ENCODE measurements at regions of chr13 and their contacts with region 1.

Region 1: DNA sequence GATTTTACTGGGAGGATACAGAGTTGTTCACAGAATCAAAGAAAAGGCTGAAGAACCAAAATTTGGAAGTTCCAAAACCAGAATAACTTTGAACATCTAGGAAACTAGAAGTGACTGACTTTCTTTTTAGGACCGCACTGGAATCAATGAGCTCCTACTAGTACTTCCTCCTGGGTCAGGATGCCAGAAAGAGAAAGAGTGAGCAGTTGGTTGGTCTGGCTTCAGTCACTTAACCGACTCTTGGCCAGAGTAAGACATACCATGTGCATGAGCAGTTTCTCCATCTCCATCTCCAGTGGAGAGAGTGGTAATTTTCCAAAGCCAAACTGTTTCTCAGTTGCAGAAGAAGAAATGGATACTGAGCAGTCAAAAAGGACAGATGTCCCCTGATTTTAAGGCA is 27.1 kb upstream of the MTUS2 start:
- DNase-seq: no peak
- H3K4me3 Mint-ChIP-seq: no peak overlapping the region
- H3K27ac Mint-ChIP-seq: no peak overlapping the region
- H3K4me1 Mint-ChIP-seq: peaks cover 4% of the 10 kb centered on the region
- H3K27me3 Mint-ChIP-seq: peaks cover 21% of the 10 kb centered on the region

Region 2: GRCh38 chr13:27362064-27362883 is 1430.7 kb before region 1 on chr13:
- intact Hi-C with region 1: loop called (anchors 1 kb)
- DNase-seq: peak; percentile 71
- H3K4me3 Mint-ChIP-seq: peak overlapping the region; percentile 49
- H3K27ac Mint-ChIP-seq: no peak overlapping the region
- H3K4me1 Mint-ChIP-seq: no peaks in the 10 kb centered on the region
- H3K27me3 Mint-ChIP-seq: peaks cover 25% of the 10 kb centered on the region

Region 3: GRCh38 chr13:28058866-28059624 is 733.9 kb before region 1 on chr13:
- intact Hi-C with region 1: loop called (anchors 2 kb)
- DNase-seq: peak; percentile 8
- H3K4me3 Mint-ChIP-seq: no peak overlapping the region
- H3K27ac Mint-ChIP-seq: no peak overlapping the region
- H3K4me1 Mint-ChIP-seq: no peaks in the 10 kb centered on the region
- H3K27me3 Mint-ChIP-seq: peaks cover 21% of the 10 kb centered on the region

Region 4: GRCh38 chr13:28128030-28128429 is 665.0 kb before region 1 on chr13:
- intact Hi-C with region 1: loop called (anchors 10 kb)
- DNase-seq: no peak
- H3K4me3 Mint-ChIP-seq: no peak overlapping the region
- H3K27ac Mint-ChIP-seq: no peak overlapping the region
- H3K4me1 Mint-ChIP-seq: no peaks in the 10 kb centered on the region
- H3K27me3 Mint-ChIP-seq: peaks cover 9% of the 10 kb centered on the region

Region 5: DNA sequence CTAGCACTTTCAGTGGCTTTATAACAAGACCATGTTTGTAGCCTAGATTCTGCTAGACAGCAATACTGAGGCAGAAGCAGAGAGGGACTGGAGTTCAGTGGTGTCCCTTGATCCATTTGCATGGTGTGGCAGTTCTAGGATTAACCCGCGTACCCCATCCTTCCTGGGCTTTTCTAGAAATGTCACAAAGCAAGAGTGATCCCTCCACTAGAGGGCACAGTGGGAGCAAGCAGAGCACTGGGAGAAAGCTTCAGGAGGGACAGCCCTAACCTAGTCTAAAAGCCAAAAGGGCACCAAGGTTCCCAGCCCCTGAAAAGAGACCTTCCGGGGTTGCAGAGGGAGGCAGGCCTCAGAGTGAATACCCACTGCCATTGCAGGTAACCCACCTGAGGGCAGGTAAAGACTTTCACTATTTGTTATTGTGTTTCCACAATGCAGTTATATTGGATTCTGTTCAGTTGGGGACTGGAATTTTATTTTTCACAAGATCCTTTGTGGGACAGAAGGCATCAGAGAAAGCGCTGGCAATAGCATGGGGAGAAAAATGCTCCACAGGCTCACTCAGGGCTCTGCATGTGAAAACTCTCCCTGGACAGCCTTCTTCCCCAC is 468.7 kb before region 1 on chr13:
- intact Hi-C with region 1: loop called (anchors 1 kb)
- DNase-seq: peak; percentile 36
- H3K4me3 Mint-ChIP-seq: no peak overlapping the region
- H3K27ac Mint-ChIP-seq: no peak overlapping the region
- H3K4me1 Mint-ChIP-seq: no peaks in the 10 kb centered on the region
- H3K27me3 Mint-ChIP-seq: peaks cover 3% of the 10 kb centered on the region

Region 6: DNA sequence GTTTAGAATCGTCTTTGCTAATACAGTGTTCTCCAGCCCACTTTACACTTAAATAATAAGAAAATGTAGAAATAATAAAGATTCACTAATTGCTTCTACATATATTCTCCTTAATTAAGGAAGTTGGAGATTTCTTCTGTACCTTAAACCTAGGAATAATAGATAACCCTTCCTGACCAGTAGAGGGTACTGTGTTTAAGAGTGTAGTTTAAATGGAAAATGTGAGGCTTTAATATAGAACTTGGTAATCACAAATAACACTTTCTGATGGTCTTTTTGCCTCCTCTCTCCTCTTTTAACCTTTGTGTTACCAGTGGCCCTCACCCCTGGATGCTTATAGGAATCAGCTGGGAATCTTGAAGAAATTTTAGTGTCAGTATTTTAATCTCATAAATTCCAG is 113.4 kb before region 1 on chr13:
- intact Hi-C with region 1: loop called (anchors 1 kb)
- DNase-seq: no peak
- H3K4me3 Mint-ChIP-seq: no peak overlapping the region
- H3K27ac Mint-ChIP-seq: no peak overlapping the region
- H3K4me1 Mint-ChIP-seq: no peaks in the 10 kb centered on the region
- H3K27me3 Mint-ChIP-seq: no peaks in the 10 kb centered on the region

Region 7: GRCh38 chr13:28942906-28943305 is 149.9 kb after region 1 on chr13:
- intact Hi-C with region 1: no loop called
- DNase-seq: no peak
- H3K4me3 Mint-ChIP-seq: no peak overlapping the region
- H3K27ac Mint-ChIP-seq: no peak overlapping the region
- H3K4me1 Mint-ChIP-seq: no peaks in the 10 kb centered on the region
- H3K27me3 Mint-ChIP-seq: peaks cover 1% of the 10 kb centered on the region

Measured in activated T-helper 1 cell treated with anti-CD3 and anti-CD28 coated beads, Interleukin-12 subunit alpha, Interleukin-12 subunit beta, Interleukin-2, Interleukin-4 antibody, amounts not matched to agents 30 ng/mL and 10 ng/mL and 1 ng/mL, durations not matched to agents 14 hours and 24 hours and 36 hours (primary cell).